ENCODE measurements at regions of chr4 and their contacts with region 1.

Region 1: GRCh38 chr4:1721004-1721665 is at the starts of genes TACC3 and TMEM129:
- DNase-seq: peak; percentile 87
- ATAC-seq: peak; percentile 87
- H3K4me3 ChIP-seq: peak within 1 kb of the TSS; percentile 86
- H3K27ac ChIP-seq: peak within 1 kb of the TSS; percentile 88
- H3K4me1 ChIP-seq: peaks cover 15% of the 10 kb centered on the region
- H3K27me3 ChIP-seq: no peaks in the 10 kb centered on the region
- CTCF ChIP-seq: no peak
- POLR2A ChIP-seq: 0 out of 2 replicates have a peak, but pooled peaks have one; percentile 20
- RAD21 ChIP-seq: no peak
- total RNA-seq, gene TACC3: 15.0 and 15.1 TPM in 2 replicates
- total RNA-seq, gene TMEM129: 6.6 and 6.7 TPM in 2 replicates

Region 2: GRCh38 chr4:1365271-1366178 is 355.6 kb before region 1 on chr4:
- CTCF ChIA-PET with region 1: no interaction called
- POLR2A ChIA-PET with region 1: no interaction called
- dilution Hi-C with region 1: no loop called
- in situ Hi-C with region 1: no loop called
- intact Hi-C with region 1: loop called (anchors 10 kb)
- DNase-seq: no peak
- ATAC-seq: no peak
- H3K4me3 ChIP-seq: no peak overlapping the region
- H3K27ac ChIP-seq: no peak overlapping the region
- H3K4me1 ChIP-seq: 0 out of 2 replicates have a peak, but pooled peaks cover 2% of the 10 kb centered on the region
- H3K27me3 ChIP-seq: no peaks in the 10 kb centered on the region
- CTCF ChIP-seq: no peak
- POLR2A ChIP-seq: no peak
- RAD21 ChIP-seq: no peak

Region 3: DNA sequence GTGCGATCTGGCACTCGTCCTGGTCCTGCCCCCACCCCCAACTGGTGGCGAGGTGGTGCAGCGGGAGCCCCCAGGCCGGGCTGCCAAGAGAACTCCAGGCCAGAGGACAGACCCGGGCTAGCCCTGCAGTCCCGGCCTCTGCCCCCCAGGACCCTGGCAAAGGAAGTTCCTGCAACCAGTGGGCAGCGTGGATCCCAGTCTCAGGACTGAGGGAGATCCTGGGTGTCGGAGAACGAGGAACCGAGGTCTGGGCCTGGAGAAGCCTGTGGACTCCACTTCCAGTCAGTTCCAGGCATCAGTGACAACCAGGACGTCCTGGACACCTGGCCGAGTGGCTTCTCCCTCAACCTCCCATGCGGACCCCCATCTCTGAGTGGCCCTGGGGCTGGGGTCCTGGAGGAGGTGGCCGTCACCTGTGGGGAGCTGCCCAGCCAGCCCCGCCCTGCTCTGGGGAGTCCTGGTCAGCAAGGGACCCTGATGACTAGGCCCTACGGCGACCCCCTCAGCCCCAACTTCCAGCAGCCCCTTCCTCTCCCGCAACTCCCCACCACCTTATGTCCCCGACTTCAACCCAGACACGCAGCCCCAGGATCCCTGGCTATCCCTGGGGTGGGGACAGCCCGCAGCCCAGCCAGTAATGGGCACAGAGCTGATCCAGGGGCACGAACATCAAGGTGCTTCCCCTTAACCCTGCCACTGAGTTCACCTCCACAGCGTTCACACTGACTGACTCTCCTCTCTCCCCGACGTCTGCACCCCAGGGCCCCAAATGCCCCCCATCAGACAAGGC is 261.2 kb before region 1 on chr4:
- CTCF ChIA-PET with region 1: no interaction called
- POLR2A ChIA-PET with region 1: no interaction called
- dilution Hi-C with region 1: no loop called
- in situ Hi-C with region 1: no loop called
- intact Hi-C with region 1: no loop called
- DNase-seq: no peak
- ATAC-seq: no peak
- H3K4me3 ChIP-seq: no peak overlapping the region
- H3K27ac ChIP-seq: no peak overlapping the region
- H3K4me1 ChIP-seq: peaks cover 2% of the 10 kb centered on the region; the same call in 1 of the 2 replicates
- H3K27me3 ChIP-seq: peaks cover 68% of the 10 kb centered on the region
- CTCF ChIP-seq: no peak
- POLR2A ChIP-seq: no peak
- RAD21 ChIP-seq: no peak